ENCODE measurements at regions of chr6 and their contacts with region 1.

Region 1: GRCh38 chr6:43013843-43014433 is at the starts of genes KLHDC3 and MEA1:
- DNase-seq: peak; percentile 97 to 99
- ATAC-seq: peak; percentile 92 to 97 (median 96)
- H3K4me3 ChIP-seq: peak within 1 kb of the TSS; percentile 65 to 85 (median 76)
- H3K27ac ChIP-seq: peak within 1 kb of the TSS; percentile 47 to 90 (median 87)
- H3K4me1 ChIP-seq: peaks cover 12 to 63% (median 50%) of the 10 kb centered on the region in 9 donors
- H3K27me3 ChIP-seq: no peaks in the 10 kb centered on the region
- CTCF ChIP-seq: no peak
- total RNA-seq, gene KLHDC3: 78.2 to 165 (median 92.0) TPM
- total RNA-seq, gene MEA1: 22.9 to 38.7 (median 28.3) TPM

Region 2: DNA sequence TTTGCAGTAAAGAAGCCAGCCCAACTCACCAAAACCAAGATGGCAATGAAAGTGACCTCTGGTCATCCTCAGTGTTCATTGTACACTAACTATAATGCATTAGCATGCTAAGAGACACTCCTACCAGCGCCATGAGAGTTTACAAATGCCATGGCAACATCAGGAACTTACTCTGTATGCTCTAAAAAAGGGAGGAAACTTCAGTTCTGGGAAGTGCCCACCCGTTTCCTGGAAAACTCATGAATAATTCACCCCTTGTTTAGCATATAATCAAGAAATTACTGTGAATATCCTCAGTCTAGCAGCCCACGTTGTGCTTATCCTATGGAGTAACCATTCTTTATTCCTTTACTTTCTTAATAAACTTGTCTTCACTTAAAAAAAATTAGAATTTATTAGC is 542.8 kb before region 1 on chr6:
- intact Hi-C with region 1: no loop called
- DNase-seq: no peak
- ATAC-seq: no peak
- H3K4me3 ChIP-seq: no peak overlapping the region
- H3K27ac ChIP-seq: no peak overlapping the region
- H3K4me1 ChIP-seq: no peaks in the 10 kb centered on the region
- H3K27me3 ChIP-seq: no peaks in the 10 kb centered on the region
- CTCF ChIP-seq: no peak

Region 3: DNA sequence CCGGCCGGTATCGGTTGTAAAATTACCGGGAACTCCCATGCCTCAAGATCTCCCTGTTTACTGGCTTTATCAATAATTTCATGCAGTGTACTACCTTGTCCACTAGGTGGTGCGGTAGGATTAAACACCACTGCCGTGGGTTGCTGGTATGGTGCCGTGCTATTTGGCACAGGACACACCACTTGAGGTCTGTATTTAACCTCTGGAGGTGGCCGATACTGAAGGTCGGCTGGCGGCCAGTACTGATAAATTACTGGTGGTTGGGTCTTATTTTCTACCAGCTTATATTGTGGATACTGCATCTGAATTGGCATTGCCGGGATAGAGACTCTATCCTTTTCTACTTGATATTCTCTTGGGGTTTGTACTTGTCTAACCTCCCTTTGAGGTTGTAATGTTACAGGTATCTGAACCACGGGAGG is 112.4 kb before region 1 on chr6:
- intact Hi-C with region 1: loop called in 1 of 10 experiments (anchors 5 kb)
- DNase-seq: peak; percentile 69 to 86
- ATAC-seq: peak; percentile 94 to 98 (median 96)
- H3K4me3 ChIP-seq: peak overlapping the region in 2 of 10 donors; percentile 1 to 11
- H3K27ac ChIP-seq: peak overlapping the region in 7 of 10 donors; percentile 11 to 70 (median 65)
- H3K4me1 ChIP-seq: peaks cover 0 to 34% (median 10%) of the 10 kb centered on the region in 9 donors
- H3K27me3 ChIP-seq: no peaks in the 10 kb centered on the region
- CTCF ChIP-seq: peak; percentile 89 to 95 (median 91)

Region 4: DNA sequence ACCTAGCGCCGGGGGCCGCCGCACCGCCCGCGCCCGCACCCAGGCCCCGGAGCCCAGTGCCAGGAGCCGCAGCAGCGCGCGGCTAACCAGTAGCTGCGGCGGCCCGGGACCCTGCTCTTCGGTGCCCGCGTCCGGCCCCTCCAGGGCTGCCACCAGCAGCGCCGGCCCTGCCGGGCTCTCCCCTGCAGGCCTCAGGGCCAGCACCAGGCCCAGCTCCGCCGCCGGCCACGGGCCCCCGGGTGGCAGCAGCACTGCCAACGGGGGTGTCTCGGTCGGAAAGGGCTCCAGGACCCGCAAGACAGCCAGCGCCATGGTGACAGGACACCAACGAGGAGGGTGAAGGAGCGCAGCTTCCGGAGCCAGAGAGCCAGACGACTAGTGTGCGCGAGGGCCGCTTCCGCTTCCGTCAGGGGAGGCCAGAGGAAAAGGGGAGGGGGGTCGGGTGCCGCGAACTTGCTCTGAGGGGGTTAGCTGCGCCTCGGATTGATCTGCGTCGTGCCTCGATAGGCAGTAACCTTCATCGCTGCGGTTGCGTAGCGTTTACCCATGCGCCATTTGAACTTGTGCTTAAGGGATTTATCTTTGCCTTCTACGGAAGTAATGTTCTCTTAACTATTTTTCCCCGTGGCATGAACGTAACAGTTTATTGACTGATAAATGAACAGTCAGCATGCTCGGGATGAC is 35.0 kb before region 1 on chr6 and contains the start of gene PEX6:
- intact Hi-C with region 1: loop called in 1 of 10 experiments (anchors 5 kb)
- DNase-seq: peak; percentile 92 to 93
- ATAC-seq: peak; percentile 93 to 97 (median 96)
- H3K4me3 ChIP-seq: peak within 1 kb of the TSS; percentile 72 to 98 (median 90)
- H3K27ac ChIP-seq: peak within 1 kb of the TSS; percentile 81 to 97 (median 92)
- H3K4me1 ChIP-seq: peaks cover 7 to 54% (median 27%) of the 10 kb centered on the region in 9 donors
- H3K27me3 ChIP-seq: no peaks in the 10 kb centered on the region
- CTCF ChIP-seq: no peak
- total RNA-seq, gene PEX6: 11.2 to 32.6 (median 17.2) TPM

Region 5: GRCh38 chr6:43040542-43041257 is 26.8 kb after region 1 on chr6:
- intact Hi-C with region 1: no loop called
- DNase-seq: no peak
- ATAC-seq: no peak
- H3K4me3 ChIP-seq: no peak overlapping the region
- H3K27ac ChIP-seq: no peak overlapping the region
- H3K4me1 ChIP-seq: peaks cover 0 to 21% (median 9%) of the 10 kb centered on the region in 9 donors
- H3K27me3 ChIP-seq: no peaks in the 10 kb centered on the region
- CTCF ChIP-seq: no peak

Region 6: GRCh38 chr6:43059168-43060033 is 45.5 kb after region 1 on chr6 and contains the starts of genes KLC4 and MRPL2:
- intact Hi-C with region 1: loop called in 6 of 10 experiments (anchors 1 to 5 kb)
- DNase-seq: peak; percentile 96 to 99
- ATAC-seq: peak; percentile 95 to 99 (median 98)
- H3K4me3 ChIP-seq: peak within 1 kb of the TSS; percentile 73 to 96 (median 85)
- H3K27ac ChIP-seq: peak within 1 kb of the TSS; percentile 72 to 97 (median 89)
- H3K4me1 ChIP-seq: peaks cover 8 to 33% (median 30%) of the 10 kb centered on the region in 9 donors
- H3K27me3 ChIP-seq: no peaks in the 10 kb centered on the region
- CTCF ChIP-seq: no peak
- total RNA-seq, gene KLC4: 26.3 to 34.2 (median 28.3) TPM
- total RNA-seq, gene MRPL2: 76.0 to 139 (median 93.5) TPM

Region 7: DNA sequence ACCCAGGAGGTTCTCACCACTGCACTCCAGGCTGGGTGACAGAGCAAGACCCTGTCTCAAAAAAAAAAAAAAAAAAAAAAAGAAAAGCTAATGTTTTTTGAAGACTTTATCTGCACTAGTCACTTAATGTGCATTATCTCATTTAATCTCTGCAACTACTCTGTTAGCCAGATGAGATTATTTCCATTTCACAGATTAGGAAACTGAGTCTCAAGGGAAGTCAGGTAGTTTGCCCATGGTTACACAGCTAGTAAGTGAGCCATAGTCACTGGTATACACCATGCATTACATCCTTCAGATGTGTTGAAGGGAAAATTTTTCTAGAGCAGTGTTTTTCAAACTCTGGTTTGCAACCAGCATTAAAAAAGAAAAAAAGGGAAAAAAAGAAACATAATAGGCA is 150.0 kb after region 1 on chr6:
- intact Hi-C with region 1: no loop called
- DNase-seq: no peak
- ATAC-seq: no peak
- H3K4me3 ChIP-seq: no peak overlapping the region
- H3K27ac ChIP-seq: no peak overlapping the region
- H3K4me1 ChIP-seq: no peaks in the 10 kb centered on the region
- H3K27me3 ChIP-seq: no peaks in the 10 kb centered on the region
- CTCF ChIP-seq: no peak

Region 8: GRCh38 chr6:43174263-43175112 is 160.6 kb after region 1 on chr6:
- intact Hi-C with region 1: loop called in 2 of 10 experiments (anchors 2 to 5 kb)
- DNase-seq: peak; percentile 89 to 98
- ATAC-seq: peak; percentile 67 to 89 (median 83)
- H3K4me3 ChIP-seq: peak overlapping the region in 9 of 10 donors; percentile 37 to 99 (median 97)
- H3K27ac ChIP-seq: peak overlapping the region; percentile 85 to 99 (median 98)
- H3K4me1 ChIP-seq: peaks cover 19 to 51% (median 34%) of the 10 kb centered on the region in 9 donors
- H3K27me3 ChIP-seq: no peaks in the 10 kb centered on the region
- CTCF ChIP-seq: peak in 6 of 9 donors; percentile 16 to 49 (median 30)

Measured in heart right ventricle (tissue), 16 donors.